ENCODE measurements at regions of chr6 and their contacts with region 1.

Region 1: GRCh38 chr6:131949909-131950766 is 1.0 kb downstream of the CCN2 start:
- DNase-seq: peak; percentile 76 to 92 (median 91)
- ATAC-seq: peak; percentile 73 to 77
- H3K4me3 ChIP-seq: peak overlapping the region; percentile 85
- H3K27ac ChIP-seq: peak overlapping the region; percentile 96
- H3K4me1 ChIP-seq: no peaks in the 10 kb centered on the region
- H3K27me3 ChIP-seq: no peaks in the 10 kb centered on the region

Region 2: DNA sequence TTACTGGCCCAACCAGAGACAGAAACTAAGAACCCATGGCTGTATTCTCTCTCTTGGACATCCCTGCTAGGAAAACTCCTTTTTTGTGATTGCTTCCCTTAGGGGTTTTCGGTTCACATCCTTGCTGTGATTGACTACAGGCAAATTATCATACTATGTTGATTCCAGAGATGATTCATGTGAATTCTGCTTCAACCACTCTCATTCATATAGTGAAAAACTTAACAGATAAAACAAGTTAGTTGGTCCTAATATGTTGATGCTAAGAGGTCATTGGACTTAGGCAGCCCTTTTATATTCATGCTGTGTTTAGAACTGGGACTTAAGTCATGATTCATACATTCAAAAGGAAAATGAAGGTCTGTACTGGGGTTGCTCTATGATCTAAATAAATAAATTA is 77.9 kb after region 1 on chr6:
- intact Hi-C with region 1: no loop called
- DNase-seq: no peak
- ATAC-seq: no peak
- H3K4me3 ChIP-seq: no peak overlapping the region
- H3K27ac ChIP-seq: no peak overlapping the region
- H3K4me1 ChIP-seq: no peaks in the 10 kb centered on the region
- H3K27me3 ChIP-seq: no peaks in the 10 kb centered on the region

Region 3: GRCh38 chr6:132084833-132085509 is 134.8 kb after region 1 on chr6:
- intact Hi-C with region 1: no loop called
- DNase-seq: no peak
- ATAC-seq: peak in 1 of 2 donors; percentile 67
- H3K4me3 ChIP-seq: no peak overlapping the region
- H3K27ac ChIP-seq: peak overlapping the region; percentile 54
- H3K4me1 ChIP-seq: peaks cover 3% of the 10 kb centered on the region
- H3K27me3 ChIP-seq: no peaks in the 10 kb centered on the region

Region 4: GRCh38 chr6:132131758-132132157 is 181.6 kb after region 1 on chr6:
- intact Hi-C with region 1: loop called in 3 of 4 experiments (anchors 5 to 10 kb)
- DNase-seq: peak; percentile 46 to 59 (median 49)
- ATAC-seq: peak; percentile 90 to 95
- H3K4me3 ChIP-seq: no peak overlapping the region
- H3K27ac ChIP-seq: peak overlapping the region; percentile 98
- H3K4me1 ChIP-seq: peaks cover 7% of the 10 kb centered on the region
- H3K27me3 ChIP-seq: no peaks in the 10 kb centered on the region

Region 5: DNA sequence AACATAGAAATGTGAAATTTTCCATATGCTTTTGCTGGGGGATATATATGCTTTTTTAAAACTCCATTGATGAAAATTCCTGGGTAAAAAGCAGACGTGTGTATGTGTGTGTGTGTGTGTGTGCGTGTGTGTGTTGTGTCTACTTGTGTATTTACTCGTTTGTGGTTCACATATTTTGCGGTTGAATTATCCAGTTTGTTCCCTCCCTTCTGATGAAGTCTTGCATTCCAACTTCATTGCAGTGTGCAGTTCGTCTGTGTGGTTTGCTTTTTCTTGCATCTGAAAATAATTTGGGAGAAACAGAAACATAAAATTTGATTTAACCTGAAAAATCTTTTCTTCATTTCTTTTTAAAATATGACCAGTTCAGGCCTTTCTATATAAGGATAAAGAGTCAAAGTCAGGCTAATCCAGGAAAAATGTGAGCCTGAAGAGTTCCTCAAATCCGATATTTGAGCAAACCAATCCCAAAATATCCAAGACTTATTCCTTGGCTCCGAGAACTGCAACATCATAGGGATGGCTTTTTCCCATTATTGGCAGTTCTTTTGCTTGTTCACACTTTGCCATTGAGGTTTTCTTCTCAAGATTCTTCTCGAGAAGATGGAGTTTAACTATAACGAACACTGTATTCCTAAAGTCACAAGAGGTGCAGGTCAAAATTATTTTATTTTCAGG is 203.2 kb after region 1 on chr6:
- intact Hi-C with region 1: loop called in 1 of 4 experiments (anchors 10 kb)
- DNase-seq: no peak
- ATAC-seq: no peak
- H3K4me3 ChIP-seq: no peak overlapping the region
- H3K27ac ChIP-seq: no peak overlapping the region
- H3K4me1 ChIP-seq: no peaks in the 10 kb centered on the region
- H3K27me3 ChIP-seq: no peaks in the 10 kb centered on the region